ENCODE measurements at regions of chr1 and their contacts with region 1.

Region 1: DNA sequence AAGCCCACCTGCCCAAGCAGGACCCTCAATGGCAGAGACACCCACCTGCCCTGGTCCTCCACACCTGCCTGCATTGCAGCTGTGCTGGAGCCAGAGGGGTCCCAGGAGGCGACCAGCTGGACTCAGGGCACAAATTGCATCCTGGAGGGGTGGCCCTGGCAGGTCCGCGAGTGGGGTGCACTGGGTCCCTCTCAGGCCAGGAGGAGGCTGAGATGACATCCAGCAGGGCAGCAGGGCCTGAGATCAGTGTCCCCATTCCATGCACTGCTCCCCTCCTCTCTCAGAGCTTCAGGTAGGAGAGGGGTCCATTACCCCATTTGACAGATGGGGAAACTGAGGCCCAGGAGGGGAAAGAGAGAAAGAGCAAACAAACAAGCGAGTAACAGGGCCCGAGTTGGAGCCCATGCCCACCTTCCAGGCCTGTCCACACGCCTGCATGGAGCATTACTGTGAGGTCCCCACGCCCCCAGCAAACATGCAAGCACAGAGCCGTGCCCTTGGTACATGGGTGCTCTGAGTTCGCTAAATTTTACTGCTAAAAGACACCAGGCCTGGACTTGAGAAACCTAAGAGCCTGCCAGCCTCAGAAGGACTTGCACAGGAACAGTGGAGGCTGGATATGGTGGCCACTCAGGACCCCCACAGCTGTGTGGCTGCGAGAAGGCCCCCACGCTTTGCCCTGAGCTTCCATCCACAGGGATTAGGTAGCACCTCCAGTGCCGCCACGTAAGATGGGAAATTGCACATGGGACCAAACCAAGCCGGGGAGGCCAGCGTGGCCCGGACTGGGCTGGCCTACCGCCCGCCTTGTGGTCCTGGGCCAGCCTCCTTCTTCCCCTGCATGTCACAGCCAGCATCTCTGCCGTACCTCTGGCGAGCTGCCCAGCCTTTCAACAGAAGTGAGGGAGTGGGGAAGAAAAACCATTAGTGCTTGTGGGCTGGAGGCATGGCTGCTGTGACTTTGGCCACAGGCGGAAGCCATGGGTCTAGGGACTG is 7.4 kb downstream of the WNT3A start:
- DNase-seq: no peak
- H3K4me3 ChIP-seq: no peak overlapping the region
- H3K27ac ChIP-seq: no peak overlapping the region
- H3K4me1 ChIP-seq: peaks cover 9% of the 10 kb centered on the region; the same call in 1 of the 2 replicates
- H3K27me3 ChIP-seq: peaks cover 13% of the 10 kb centered on the region; the same call in 1 of the 2 replicates
- CTCF ChIP-seq: no peak

Region 2: GRCh38 chr1:227759341-227760300 is 254.6 kb before region 1 on chr1:
- CTCF ChIA-PET with region 1: no interaction called
- POLR2A ChIA-PET with region 1: no interaction called
- intact Hi-C with region 1: no loop called
- DNase-seq: peak; percentile 82 to 90
- H3K4me3 ChIP-seq: no peak overlapping the region
- H3K27ac ChIP-seq: no peak overlapping the region
- H3K4me1 ChIP-seq: peaks cover 31% of the 10 kb centered on the region
- H3K27me3 ChIP-seq: no peaks in the 10 kb centered on the region
- CTCF ChIP-seq: no peak

Region 3: DNA sequence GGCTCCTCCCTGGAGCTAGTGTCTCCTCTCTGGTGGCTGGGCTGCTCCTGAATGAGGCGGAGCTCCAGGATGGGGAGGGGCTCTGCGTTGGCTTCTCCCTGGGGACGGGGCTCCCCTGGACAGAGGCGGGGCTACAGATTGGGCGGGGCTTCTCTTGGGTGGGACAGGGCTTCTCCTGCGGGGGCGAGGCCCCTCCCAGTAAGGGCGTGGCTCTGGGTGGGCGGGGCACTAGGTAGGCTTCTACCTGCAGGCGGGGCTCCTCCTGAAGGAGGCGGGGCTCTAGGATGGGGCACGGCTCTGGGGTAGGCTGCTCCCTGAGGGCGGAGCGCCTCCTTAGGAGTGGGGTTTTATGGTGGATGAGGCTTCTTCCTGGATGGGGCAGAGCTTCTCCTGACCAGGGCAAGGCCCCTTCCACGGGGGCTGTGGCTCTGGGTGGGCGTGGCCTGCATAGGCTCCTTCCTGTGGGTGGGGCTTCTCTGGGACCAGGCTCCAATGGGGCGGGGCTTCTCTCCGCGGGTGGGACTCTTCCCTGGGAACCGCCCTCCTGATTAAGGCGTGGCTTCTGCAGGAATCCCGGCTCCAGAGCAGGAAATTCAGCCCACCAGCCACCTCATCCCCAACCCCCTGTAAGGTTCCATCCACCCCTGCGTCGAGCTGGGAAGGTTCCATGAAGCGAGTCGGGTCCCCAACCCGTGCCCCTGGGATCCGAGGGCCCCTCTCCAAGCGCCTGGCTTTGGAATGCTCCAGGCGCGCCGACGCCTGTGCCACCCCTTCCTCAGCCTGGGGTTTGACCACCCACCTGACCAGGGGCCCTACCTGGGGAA is 45.6 kb after region 1 on chr1:
- CTCF ChIA-PET with region 1: no interaction called
- POLR2A ChIA-PET with region 1: no interaction called
- intact Hi-C with region 1: loop called (anchors 1 kb)
- DNase-seq: peak; percentile 80 to 99
- H3K4me3 ChIP-seq: peak overlapping the region; percentile 96
- H3K27ac ChIP-seq: no peak overlapping the region
- H3K4me1 ChIP-seq: peaks cover 15% of the 10 kb centered on the region
- H3K27me3 ChIP-seq: no peaks in the 10 kb centered on the region
- CTCF ChIP-seq: no peak

Region 4: GRCh38 chr1:228082135-228082891 is 68.1 kb after region 1 on chr1 and contains the start of gene ARF1:
- CTCF ChIA-PET with region 1: no interaction called
- POLR2A ChIA-PET with region 1: interaction called, 4 read pairs
- intact Hi-C with region 1: loop called (anchors 5 kb)
- DNase-seq: peak; percentile 70 to 95
- H3K4me3 ChIP-seq: peak within 1 kb of the TSS; percentile 100
- H3K27ac ChIP-seq: peak within 1 kb of the TSS; percentile 78
- H3K4me1 ChIP-seq: peaks cover 38% of the 10 kb centered on the region
- H3K27me3 ChIP-seq: no peaks in the 10 kb centered on the region
- CTCF ChIP-seq: no peak
- total RNA-seq, gene ARF1: 431 and 595 TPM in 2 replicates